ENCODE measurements at regions of chr1 and their contacts with region 1.

Region 1: DNA sequence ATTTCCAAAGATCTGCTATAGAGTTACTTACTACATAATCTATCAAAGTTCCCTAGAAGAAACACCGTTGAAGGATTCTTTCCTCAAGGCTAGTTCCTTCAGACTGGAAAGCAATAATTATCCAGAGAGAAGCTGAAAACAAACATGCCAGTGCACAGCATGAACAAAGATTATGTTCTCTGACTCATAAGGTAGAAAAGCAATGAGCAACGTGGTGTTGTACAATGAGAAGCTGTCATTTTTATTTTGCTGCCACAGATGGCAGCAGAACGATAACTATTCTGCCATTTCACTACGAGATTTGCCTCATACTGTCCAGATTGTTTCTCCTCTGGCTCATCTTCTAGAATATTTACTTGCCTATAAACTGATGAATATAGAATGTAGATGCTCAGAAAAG is 10.7 kb downstream of the EXTL2 start:
- DNase-seq: no peak
- ATAC-seq: no peak
- H3K4me3 Mint-ChIP-seq: no peak overlapping the region
- H3K27ac Mint-ChIP-seq: no peak overlapping the region
- H3K4me1 Mint-ChIP-seq: peaks cover 11% of the 10 kb centered on the region
- H3K27me3 Mint-ChIP-seq: no peaks in the 10 kb centered on the region
- CTCF ChIP-seq: no peak

Region 2: DNA sequence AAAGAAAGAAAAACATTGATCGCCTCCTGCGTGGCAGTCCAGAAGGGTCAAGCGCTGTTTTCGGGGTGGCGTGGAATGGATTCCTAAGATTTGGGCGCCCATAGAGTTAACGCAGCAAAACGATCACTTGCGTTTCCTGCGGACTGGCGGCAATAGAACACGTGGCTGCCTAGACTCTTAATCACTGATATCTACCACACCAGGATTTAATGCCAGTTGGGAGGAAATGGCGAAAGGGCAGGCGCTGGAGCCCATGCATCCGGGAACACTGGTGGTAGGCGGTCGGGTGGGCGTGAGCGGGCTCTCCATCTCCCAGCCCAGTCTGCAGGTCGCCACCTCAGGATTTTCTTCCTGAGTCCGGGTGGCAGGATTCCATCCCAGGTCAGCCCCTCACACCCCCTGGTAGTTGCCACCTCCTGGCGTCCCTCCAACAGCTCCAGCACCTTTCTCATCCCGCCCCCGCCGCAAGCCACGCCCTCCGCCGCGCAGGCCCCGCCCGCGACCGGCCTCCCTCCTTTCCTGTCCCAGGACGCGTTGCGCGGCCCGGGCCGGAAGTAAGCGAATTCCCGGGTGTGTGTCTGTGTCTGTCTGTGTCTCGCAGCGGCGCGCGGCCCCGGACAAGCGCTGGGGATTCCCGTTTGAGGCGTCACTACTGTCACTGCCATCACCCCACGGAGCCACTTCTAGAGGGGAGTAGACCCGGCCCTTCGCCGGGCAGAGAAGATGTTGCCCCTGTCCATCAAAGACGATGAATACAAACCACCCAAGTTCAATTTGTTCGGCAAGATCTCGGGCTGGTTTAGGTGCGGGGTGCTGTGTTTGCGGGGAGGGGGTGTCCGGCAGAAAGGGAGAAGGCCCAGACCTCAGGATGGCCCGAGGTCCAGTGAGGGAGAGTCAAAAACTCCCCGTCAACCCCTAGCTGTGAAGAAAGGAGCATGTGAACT is 11.8 kb after region 1 on chr1 and contains the start of gene SLC30A7:
- CTCF ChIA-PET with region 1: interaction called, 12 read pairs
- POLR2A ChIA-PET with region 1: interaction called, 9 read pairs
- intact Hi-C with region 1: no loop called
- DNase-seq: peak; percentile 97
- ATAC-seq: peak; percentile 77
- H3K4me3 Mint-ChIP-seq: peak within 1 kb of the TSS; percentile 98
- H3K27ac Mint-ChIP-seq: peak within 1 kb of the TSS; percentile 99
- H3K4me1 Mint-ChIP-seq: peaks cover 48% of the 10 kb centered on the region
- H3K27me3 Mint-ChIP-seq: no peaks in the 10 kb centered on the region
- CTCF ChIP-seq: no peak
- total RNA-seq, gene SLC30A7: 32.0 to 36.1 TPM

Region 3: GRCh38 chr1:100912019-100912418 is 28.1 kb after region 1 on chr1:
- CTCF ChIA-PET with region 1: no interaction called
- POLR2A ChIA-PET with region 1: no interaction called
- intact Hi-C with region 1: no loop called
- DNase-seq: no peak
- ATAC-seq: no peak
- H3K4me3 Mint-ChIP-seq: no peak overlapping the region
- H3K27ac Mint-ChIP-seq: no peak overlapping the region
- H3K4me1 Mint-ChIP-seq: peaks cover 39% of the 10 kb centered on the region
- H3K27me3 Mint-ChIP-seq: no peaks in the 10 kb centered on the region
- CTCF ChIP-seq: no peak

Region 4: GRCh38 chr1:100995198-100995988 is 111.4 kb after region 1 on chr1:
- CTCF ChIA-PET with region 1: no interaction called
- POLR2A ChIA-PET with region 1: no interaction called
- intact Hi-C with region 1: no loop called
- DNase-seq: no peak
- ATAC-seq: no peak
- H3K4me3 Mint-ChIP-seq: no peak overlapping the region
- H3K27ac Mint-ChIP-seq: no peak overlapping the region
- H3K4me1 Mint-ChIP-seq: peaks cover 16% of the 10 kb centered on the region
- H3K27me3 Mint-ChIP-seq: no peaks in the 10 kb centered on the region
- CTCF ChIP-seq: no peak